CD8-positive, alpha-beta memory T cell (primary cell): ENCODE measurements at regions of chr9 and their contacts with region 1.

Region 1: GRCh38 chr9:132240753-132241493 is 79.1 kb downstream of the NTNG2 start:
- DNase-seq: peak; percentile 98 to 100 (median 100)
- H3K4me3 ChIP-seq: peak overlapping the region; percentile 82
- H3K4me3 Mint-ChIP-seq: peak overlapping the region; percentile 98 to 100 (median 99)
- H3K27ac ChIP-seq: no peak overlapping the region
- H3K27ac Mint-ChIP-seq: peak overlapping the region; percentile 86 to 99 (median 92)
- H3K4me1 ChIP-seq: peaks cover 13% of the 10 kb centered on the region
- H3K4me1 Mint-ChIP-seq: peaks cover 15 to 31% (median 15%) of the 10 kb centered on the region in 3 donors
- H3K27me3 ChIP-seq: no peaks in the 10 kb centered on the region
- H3K27me3 Mint-ChIP-seq: peaks cover 4 to 6% of the 10 kb centered on the region in 2 donors

Region 2: DNA sequence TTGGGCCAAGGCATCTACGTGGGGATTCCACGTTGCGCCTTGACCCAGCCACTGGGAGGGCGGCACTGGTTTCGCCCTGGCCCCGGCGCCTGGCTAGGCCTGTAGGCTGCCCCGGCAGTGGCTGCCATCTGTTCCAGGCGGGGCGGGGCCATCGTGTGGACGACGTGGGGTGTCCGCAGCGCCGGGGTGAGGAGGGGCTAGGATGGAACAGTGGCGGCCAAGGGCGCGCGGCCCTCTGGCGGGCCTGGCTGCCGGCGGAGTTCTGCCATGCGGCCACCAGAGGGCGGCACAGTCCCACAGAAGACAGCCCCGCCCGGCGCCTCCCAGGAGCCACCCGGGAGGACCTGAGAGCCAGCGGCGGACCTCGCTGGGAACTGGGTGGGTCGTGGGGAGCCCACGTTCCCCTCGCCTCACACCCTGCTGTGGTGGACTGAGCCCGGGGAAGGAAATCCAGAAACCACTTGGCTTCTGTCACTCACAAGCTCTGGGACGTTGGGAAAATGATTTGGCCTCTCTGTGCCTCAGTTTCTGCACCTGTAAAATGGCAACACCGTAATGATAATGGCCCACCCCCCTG is 478.5 kb before region 1 on chr9:
- CTCF ChIA-PET with region 1: interaction called, 18 read pairs
- POLR2A ChIA-PET with region 1: no interaction called
- DNase-seq: peak; percentile 64 to 78 (median 73)
- H3K4me3 ChIP-seq: no peak overlapping the region
- H3K4me3 Mint-ChIP-seq: no peak overlapping the region
- H3K27ac ChIP-seq: no peak overlapping the region
- H3K27ac Mint-ChIP-seq: no peak overlapping the region
- H3K4me1 ChIP-seq: no peaks in the 10 kb centered on the region
- H3K4me1 Mint-ChIP-seq: no peaks in the 10 kb centered on the region
- H3K27me3 ChIP-seq: peaks cover 6% of the 10 kb centered on the region
- H3K27me3 Mint-ChIP-seq: peaks cover 3 to 24% of the 10 kb centered on the region in 2 donors

Region 3: DNA sequence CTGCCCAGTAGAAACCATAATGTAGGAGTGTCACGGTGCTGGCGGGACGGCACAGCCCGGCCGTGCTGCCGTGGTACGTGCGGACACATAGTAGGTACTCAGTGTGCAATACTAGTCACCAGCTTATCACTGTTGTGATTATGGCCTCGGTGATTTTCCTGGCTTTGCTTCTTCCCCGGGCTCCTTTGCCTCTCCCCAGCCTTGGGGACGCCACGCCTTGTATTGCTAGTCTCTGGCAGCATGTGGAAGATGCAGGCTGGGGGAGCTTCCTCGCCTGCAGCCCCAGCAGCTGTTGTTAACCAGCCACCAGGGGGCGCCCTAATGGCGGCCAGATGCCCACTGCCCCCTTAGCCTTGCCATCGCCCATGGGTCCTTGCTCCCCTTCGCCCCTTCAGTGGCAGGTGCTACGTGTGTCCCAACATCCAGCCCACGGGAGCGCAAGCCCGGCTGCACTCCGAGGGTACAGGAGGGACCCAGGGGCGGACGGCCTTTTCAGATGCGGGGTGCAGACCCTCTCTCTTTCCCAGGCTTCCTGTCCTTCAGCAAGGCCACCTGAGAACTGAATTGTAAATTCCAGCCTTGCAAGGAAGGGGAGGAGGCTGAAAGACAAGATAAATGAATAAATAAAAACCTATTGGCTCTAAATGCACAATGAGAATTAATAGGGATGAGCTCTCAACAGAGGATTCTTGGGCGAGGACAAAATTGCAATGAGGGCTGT is 71.1 kb before region 1 on chr9:
- CTCF ChIA-PET with region 1: interaction called, 26 read pairs
- POLR2A ChIA-PET with region 1: no interaction called
- DNase-seq: peak; percentile 32 to 64 (median 42)
- H3K4me3 ChIP-seq: no peak overlapping the region
- H3K4me3 Mint-ChIP-seq: no peak overlapping the region
- H3K27ac ChIP-seq: no peak overlapping the region
- H3K27ac Mint-ChIP-seq: no peak overlapping the region
- H3K4me1 ChIP-seq: no peaks in the 10 kb centered on the region
- H3K4me1 Mint-ChIP-seq: peaks cover 0 to 3% (median under 1%) of the 10 kb centered on the region in 3 donors
- H3K27me3 ChIP-seq: peaks cover 1% of the 10 kb centered on the region
- H3K27me3 Mint-ChIP-seq: peaks cover 10 to 38% of the 10 kb centered on the region in 2 donors

Region 4: DNA sequence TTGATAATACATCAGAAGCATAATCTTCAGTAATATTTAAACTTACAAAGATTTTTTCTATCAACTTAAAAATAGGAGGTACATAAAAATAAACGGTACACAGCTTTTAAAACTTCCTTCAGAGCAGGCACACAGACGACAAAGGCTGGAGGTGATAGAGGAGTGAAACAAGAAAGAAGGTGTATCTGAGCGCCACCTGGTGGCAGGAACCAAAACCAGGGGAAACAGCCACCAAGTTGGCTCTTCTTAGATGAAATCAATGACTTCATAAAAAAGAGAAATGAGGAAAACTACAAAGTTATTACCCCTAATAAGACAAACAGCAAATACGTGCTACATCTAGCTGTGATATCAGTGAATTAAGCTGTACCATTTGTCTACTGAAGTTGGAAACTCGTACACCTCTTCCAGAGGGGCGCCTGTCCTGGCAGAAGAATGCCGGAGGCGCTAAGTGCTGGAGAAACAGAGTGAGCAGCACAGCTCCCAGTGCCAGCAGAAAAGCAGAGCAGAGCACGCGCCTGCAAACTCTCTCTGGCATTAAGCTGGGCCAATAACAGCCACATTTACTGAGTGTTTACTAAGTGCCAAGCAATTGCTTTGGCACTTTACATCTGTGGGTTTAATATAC is 27.9 kb after region 1 on chr9:
- CTCF ChIA-PET with region 1: interaction called, 13 read pairs
- POLR2A ChIA-PET with region 1: no interaction called
- DNase-seq: peak; percentile 41 to 73 (median 59)
- H3K4me3 ChIP-seq: no peak overlapping the region
- H3K4me3 Mint-ChIP-seq: no peak overlapping the region
- H3K27ac ChIP-seq: no peak overlapping the region
- H3K27ac Mint-ChIP-seq: peak overlapping the region in 7 of 8 donors; percentile 21 to 91 (median 70)
- H3K4me1 ChIP-seq: peaks cover 8% of the 10 kb centered on the region
- H3K4me1 Mint-ChIP-seq: peaks cover 2 to 11% (median 9%) of the 10 kb centered on the region in 3 donors
- H3K27me3 ChIP-seq: no peaks in the 10 kb centered on the region
- H3K27me3 Mint-ChIP-seq: peaks cover 0 to 1% of the 10 kb centered on the region in 2 donors